ENCODE measurements at regions of chr18 and their contacts with region 1.

Region 1: DNA sequence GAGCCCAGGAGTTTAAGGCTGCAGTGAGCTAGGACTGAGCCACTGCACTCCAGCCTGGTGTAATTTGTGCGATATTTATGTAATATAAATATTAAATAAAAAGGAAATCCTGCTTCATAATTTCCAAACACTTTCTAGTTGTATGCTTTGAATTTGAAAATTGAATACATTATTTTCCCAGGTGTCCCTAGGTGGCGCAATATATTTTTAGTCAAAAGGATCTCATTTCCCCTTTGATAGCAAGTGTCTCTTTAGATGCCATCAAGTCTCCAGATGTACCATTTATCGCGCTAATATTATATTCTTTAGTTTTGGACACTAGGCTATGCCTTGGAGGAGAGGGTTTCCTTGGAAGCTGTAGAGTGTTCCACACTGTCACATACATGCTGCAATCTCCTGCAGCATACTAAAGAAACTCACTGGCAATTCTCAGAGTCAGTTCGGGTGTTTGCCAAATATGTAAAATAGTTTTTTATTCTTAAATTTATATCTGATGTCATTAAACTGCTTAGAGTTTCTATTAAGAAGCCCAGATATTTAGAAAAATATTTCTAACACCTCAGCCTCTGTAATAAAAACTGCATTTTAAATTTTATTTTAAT is 5.6 kb upstream of the WDR7 start:
- DNase-seq: no peak
- H3K4me3 ChIP-seq: no peak overlapping the region
- H3K27ac ChIP-seq: no peak overlapping the region
- H3K27me3 ChIP-seq: no peaks in the 10 kb centered on the region
- CTCF ChIP-seq: peak; percentile 55

Region 2: GRCh38 chr18:56191334-56191733 is 454.2 kb before region 1 on chr18:
- CTCF ChIA-PET with region 1: no interaction called
- POLR2A ChIA-PET with region 1: interaction called, 16 read pairs
- DNase-seq: no peak
- H3K4me3 ChIP-seq: no peak overlapping the region
- H3K27ac ChIP-seq: no peak overlapping the region
- H3K27me3 ChIP-seq: no peaks in the 10 kb centered on the region
- CTCF ChIP-seq: no peak